H1 (cell line): ENCODE measurements at regions of chr13 and their contacts with region 1.

Region 1: DNA sequence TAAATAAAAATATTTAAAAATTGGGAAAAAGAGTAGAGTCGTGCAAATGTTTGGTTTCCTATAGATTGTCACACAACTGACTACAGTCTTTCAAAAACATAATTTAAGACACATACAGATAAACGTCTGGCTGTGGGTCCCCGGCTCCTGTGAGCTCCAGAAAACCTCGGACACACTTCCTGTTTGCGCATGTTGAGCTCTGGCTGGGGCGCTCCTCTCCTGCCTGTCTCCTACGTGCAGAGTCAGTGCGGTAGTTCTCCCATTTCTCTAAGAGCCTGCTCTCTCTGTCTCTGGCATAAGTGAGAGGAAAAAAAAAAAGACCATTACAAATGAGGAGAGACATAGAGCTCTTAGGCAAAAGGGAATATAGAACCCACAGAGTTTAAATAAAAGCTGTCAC is 128.2 kb upstream of the OBI1 start:
- DNase-seq: no peak
- H3K4me3 ChIP-seq: no peak overlapping the region
- H3K27ac ChIP-seq: no peak overlapping the region
- H3K4me1 ChIP-seq: peaks cover 0 to 4% (median 0%) of the 10 kb centered on the region in 4 experiments; a peak in 1 of 7 replicates
- H3K27me3 ChIP-seq: peaks cover 0 to 1% (median 0%) of the 10 kb centered on the region in 4 experiments; a peak in 1 of 7 replicates
- CTCF ChIP-seq: no peak
- EP300 ChIP-seq: no peak
- POLR2A ChIP-seq: no peak
- RAD21 ChIP-seq: no peak

Region 2: DNA sequence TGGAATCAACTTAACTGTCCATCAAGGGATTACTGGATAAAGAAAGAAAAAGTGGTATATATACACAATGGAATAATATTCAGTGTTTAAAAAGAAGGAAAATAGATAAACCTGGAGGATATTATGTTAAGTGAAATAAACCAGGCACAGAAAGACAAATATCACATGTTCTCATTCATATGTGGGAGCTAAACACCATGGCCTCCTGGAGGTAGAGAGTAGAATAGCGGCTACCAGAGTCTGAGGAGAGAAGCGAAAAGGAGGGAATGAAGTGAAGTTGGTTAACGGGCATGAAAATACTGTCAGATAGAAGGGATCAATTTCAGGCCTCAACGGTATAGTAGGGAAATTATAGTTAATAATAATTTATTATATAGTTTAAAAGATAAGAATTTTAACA is 19.3 kb after region 1 on chr13:
- CTCF ChIA-PET with region 1: interaction called, 11 read pairs
- POLR2A ChIA-PET with region 1: no interaction called
- DNase-seq: no peak
- H3K4me3 ChIP-seq: no peak overlapping the region
- H3K27ac ChIP-seq: no peak overlapping the region
- H3K4me1 ChIP-seq: no peaks in the 10 kb centered on the region
- H3K27me3 ChIP-seq: no peaks in the 10 kb centered on the region
- CTCF ChIP-seq: peak in 1 of 3 experiments; percentile 48; a peak in 1 of 4 replicates
- EP300 ChIP-seq: no peak
- POLR2A ChIP-seq: no peak
- RAD21 ChIP-seq: peak; percentile 53 to 55